Transverse colon (tissue), 4 donors: ENCODE measurements at regions of chr18 and their contacts with region 1.

Region 1: GRCh38 chr18:51824746-51825145 is 515.3 kb upstream of the DCC start:
- DNase-seq: no peak
- H3K4me3 ChIP-seq: no peak overlapping the region
- H3K27ac ChIP-seq: no peak overlapping the region
- H3K4me1 ChIP-seq: no peaks in the 10 kb centered on the region
- H3K27me3 ChIP-seq: no peaks in the 10 kb centered on the region
- CTCF ChIP-seq: no peak
- EP300 ChIP-seq: no peak
- POLR2A ChIP-seq: no peak

Region 2: DNA sequence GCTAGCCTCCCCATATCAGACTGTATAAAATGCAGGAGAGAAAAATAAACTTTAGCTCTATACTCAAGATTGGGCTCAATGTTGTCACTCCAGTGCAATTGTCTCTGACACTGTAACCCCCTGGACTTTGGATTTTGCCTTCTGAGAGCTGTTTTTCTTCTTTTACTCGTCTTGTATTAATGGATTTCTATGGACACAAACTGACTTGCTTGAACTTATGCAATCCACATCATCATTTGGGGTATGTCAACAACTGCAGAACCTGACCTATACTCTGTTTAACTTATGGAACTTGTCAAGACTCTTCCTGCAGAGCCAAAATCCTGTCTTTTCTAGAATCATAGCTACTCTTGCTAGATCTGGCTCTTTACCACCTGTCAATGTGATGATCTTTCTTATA is 257.5 kb after region 1 on chr18:
- in situ Hi-C with region 1: no loop called
- intact Hi-C with region 1: loop called (anchors 10 kb)
- DNase-seq: no peak
- H3K4me3 ChIP-seq: no peak overlapping the region
- H3K27ac ChIP-seq: no peak overlapping the region
- H3K4me1 ChIP-seq: no peaks in the 10 kb centered on the region
- H3K27me3 ChIP-seq: no peaks in the 10 kb centered on the region
- CTCF ChIP-seq: no peak
- EP300 ChIP-seq: no peak
- POLR2A ChIP-seq: no peak